Naive thymus-derived CD4-positive, alpha-beta T cell (primary cell): ENCODE measurements at regions of chr10 and their contacts with region 1.

Region 1: DNA sequence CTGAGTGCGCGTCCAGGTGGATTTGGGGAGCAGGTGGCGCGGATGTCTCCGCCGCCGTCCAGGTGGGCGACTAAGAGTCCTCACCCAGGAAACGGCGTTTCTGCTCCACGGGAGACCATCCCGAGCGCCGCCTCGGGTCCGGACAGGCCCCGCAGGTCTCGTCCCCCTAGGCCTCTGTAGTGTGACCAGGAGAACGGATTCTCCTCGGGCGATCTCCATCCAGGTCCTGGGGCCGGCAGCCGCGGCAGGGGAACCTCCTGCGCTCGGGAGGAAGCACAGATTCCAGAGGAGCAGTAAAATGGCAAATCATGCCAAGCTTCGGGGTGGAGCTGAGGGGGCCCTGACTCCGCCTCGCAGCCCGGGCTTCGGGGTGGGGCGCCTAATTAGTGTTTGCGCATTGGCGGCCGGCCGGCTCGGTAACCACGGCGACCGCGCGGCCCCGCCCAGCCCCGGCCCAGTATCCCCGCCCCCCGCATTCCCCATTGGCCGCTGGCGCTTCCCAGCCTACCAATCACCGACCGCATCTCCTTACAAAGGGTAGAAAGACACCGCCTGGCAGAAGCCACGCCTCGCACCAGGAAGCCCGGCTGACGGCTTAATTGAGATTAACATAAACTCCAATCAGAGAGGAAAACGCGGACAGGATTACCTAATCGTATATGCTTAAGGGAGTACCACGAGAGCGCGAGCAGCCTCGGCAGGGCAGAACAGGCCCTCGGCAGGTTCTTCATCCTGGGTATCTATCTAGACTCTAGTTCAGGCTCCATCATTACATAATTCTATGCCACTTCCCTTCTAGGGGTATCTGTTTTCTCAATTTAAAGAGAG is 168.6 kb downstream of the ARHGAP12 start:
- DNase-seq: peak; percentile 85 to 98 (median 94)
- ATAC-seq: peak; percentile 97
- H3K4me3 ChIP-seq: peak overlapping the region; percentile 95
- H3K4me3 Mint-ChIP-seq: peak overlapping the region; percentile 81 to 96 (median 91)
- H3K27ac ChIP-seq: peak overlapping the region; percentile 87
- H3K27ac Mint-ChIP-seq: peak overlapping the region; percentile 90 to 100 (median 98)
- H3K4me1 ChIP-seq: peaks cover 6 to 7% of the 10 kb centered on the region in 2 donors
- H3K4me1 Mint-ChIP-seq: peaks cover 8 to 24% (median 16%) of the 10 kb centered on the region in 7 donors
- H3K27me3 ChIP-seq: no peaks in the 10 kb centered on the region
- H3K27me3 Mint-ChIP-seq: no peaks in the 10 kb centered on the region

Region 2: DNA sequence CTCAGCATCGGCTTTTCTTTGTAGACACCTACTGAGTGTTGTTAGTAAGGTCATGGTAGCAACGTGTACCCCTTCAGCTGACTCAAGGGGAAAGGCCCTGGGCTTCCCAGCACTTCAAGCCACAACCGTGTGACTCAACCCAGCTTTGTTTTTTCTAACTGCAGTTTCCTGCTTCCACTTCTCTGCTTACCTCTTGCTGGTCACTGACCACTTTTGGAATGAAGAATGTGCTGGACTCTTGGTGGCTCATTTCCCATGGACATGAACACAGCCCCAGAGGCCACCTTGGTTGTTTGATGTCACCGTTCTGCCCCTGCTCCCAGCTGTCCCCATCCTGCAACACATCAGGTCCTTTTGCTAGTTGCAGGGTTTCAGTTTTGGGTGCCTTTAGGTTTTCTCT is 658.9 kb before region 1 on chr10:
- CTCF ChIA-PET with region 1: no interaction called
- POLR2A ChIA-PET with region 1: no interaction called
- intact Hi-C with region 1: loop called in 1 of 2 experiments (anchors 5 kb)
- DNase-seq: peak in 1 of 9 donors; percentile 74
- ATAC-seq: peak; percentile 58
- H3K4me3 ChIP-seq: no peak overlapping the region
- H3K4me3 Mint-ChIP-seq: peak overlapping the region in 1 of 10 donors; percentile 85
- H3K27ac ChIP-seq: no peak overlapping the region
- H3K27ac Mint-ChIP-seq: peak overlapping the region in 3 of 9 donors; percentile 28 to 95 (median 29)
- H3K4me1 ChIP-seq: no peaks in the 10 kb centered on the region
- H3K4me1 Mint-ChIP-seq: peaks cover 0 to 66% (median 4%) of the 10 kb centered on the region in 7 donors
- H3K27me3 ChIP-seq: no peaks in the 10 kb centered on the region
- H3K27me3 Mint-ChIP-seq: peaks cover 0 to 4% (median 0%) of the 10 kb centered on the region in 5 donors

Region 3: DNA sequence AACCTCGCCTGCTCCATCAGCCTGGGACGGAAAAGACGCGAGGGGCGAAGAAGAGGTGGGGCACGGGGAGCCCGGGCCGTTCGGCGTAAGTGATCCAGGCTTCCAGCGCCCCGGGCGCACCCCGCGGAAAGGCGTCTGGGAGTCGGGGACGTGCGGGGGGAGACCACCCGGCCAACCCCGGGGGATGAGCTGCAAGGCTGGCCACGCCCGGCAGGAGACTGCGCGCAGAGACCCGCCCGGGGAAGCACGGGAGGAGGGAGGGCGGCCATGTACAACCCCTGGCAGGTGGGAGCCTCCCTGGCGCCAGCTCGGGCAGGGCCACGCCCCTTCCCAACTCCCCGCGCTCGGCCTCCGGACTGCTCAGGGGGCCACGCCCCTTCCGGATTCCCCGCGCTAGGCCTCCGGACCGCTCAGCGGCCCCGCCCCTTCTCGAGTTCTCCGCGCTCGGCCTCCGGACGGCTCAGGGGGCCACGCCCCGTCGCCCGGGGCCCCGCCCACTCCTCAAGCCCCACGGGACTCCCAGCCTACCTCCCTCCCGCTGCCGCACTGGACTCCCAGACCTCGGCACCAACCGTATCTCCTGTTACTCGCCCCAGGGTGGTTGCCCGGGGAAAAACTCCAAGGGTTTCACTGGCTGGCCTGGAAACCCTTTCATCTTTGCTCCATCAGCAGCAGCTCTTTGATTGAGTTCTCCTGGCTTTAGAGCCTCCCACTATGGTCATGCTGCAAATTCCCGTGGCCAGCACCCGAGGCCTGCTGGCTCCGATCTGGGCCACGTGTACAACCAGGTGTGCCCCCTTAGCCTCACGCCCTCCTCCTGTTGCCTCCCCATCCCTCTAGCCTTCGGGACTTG is 156.6 kb before region 1 on chr10:
- CTCF ChIA-PET with region 1: no interaction called
- POLR2A ChIA-PET with region 1: no interaction called
- intact Hi-C with region 1: loop called (anchors 1 to 5 kb)
- DNase-seq: peak; percentile 15 to 91 (median 38)
- ATAC-seq: peak; percentile 93
- H3K4me3 ChIP-seq: peak overlapping the region; percentile 61
- H3K4me3 Mint-ChIP-seq: peak overlapping the region in 9 of 10 donors; percentile 86 to 94 (median 88)
- H3K27ac ChIP-seq: no peak overlapping the region
- H3K27ac Mint-ChIP-seq: peak overlapping the region in 3 of 9 donors; percentile 36 to 74 (median 53)
- H3K4me1 ChIP-seq: peaks cover 9 to 12% of the 10 kb centered on the region in 2 donors
- H3K4me1 Mint-ChIP-seq: peaks cover 0 to 20% (median 11%) of the 10 kb centered on the region in 7 donors
- H3K27me3 ChIP-seq: no peaks in the 10 kb centered on the region
- H3K27me3 Mint-ChIP-seq: peaks cover 0 to 2% (median 0%) of the 10 kb centered on the region in 5 donors

Region 4: DNA sequence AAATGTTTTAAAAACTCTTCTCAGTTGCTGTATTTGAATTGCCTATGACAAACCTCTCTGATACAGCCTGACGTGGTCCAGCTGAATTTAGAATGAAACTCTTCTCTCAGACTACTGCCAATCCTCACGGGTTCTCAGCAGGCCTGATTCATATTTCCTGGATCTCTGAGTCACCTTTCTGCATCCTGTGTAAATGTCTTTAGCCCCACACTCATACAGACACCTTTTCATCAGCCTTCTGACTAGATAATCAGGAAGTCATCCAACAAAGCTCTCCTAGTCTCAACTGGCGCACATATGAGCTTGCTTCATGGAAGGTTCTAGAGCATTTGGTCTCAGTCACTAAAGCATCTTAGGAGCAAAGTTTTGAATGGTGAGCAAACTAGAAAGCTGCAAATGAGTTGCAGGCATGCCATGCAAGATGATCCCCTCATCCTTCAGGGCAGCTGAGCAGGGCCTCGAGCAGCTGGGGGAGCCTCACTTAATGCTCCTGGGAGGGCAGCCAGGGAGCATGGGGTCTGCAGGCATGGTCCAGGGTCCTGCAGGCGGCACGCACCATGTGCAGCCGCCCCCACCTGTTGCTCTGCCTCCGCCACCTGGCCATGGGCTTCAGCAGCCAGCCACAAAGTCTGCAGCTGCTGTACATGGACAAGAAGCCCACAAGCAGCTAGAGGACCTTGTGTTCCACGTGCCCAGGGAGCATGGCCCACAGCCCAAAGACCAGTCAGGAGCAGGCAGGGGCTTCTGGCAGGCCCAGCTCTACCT is 14.2 kb before region 1 on chr10:
- CTCF ChIA-PET with region 1: no interaction called
- POLR2A ChIA-PET with region 1: no interaction called
- intact Hi-C with region 1: loop called in 1 of 2 experiments (anchors 1 kb)
- DNase-seq: peak in 1 of 9 donors; percentile 45
- ATAC-seq: peak; percentile 50
- H3K4me3 ChIP-seq: no peak overlapping the region
- H3K4me3 Mint-ChIP-seq: peak overlapping the region in 1 of 10 donors; percentile 33
- H3K27ac ChIP-seq: no peak overlapping the region
- H3K27ac Mint-ChIP-seq: peak overlapping the region in 6 of 9 donors; percentile 7 to 83 (median 57)
- H3K4me1 ChIP-seq: peaks cover 0 to 4% of the 10 kb centered on the region in 2 donors
- H3K4me1 Mint-ChIP-seq: peaks cover 0 to 31% (median 6%) of the 10 kb centered on the region in 7 donors
- H3K27me3 ChIP-seq: no peaks in the 10 kb centered on the region
- H3K27me3 Mint-ChIP-seq: no peaks in the 10 kb centered on the region

Region 5: GRCh38 chr10:31808258-31809218 is 48.5 kb after region 1 on chr10:
- CTCF ChIA-PET with region 1: no interaction called
- POLR2A ChIA-PET with region 1: no interaction called
- intact Hi-C with region 1: loop called (anchors 1 to 5 kb)
- DNase-seq: peak in 8 of 9 donors; percentile 21 to 62 (median 48)
- ATAC-seq: peak; percentile 77
- H3K4me3 ChIP-seq: no peak overlapping the region
- H3K4me3 Mint-ChIP-seq: peak overlapping the region in 3 of 10 donors; percentile 51 to 78 (median 56)
- H3K27ac ChIP-seq: no peak overlapping the region
- H3K27ac Mint-ChIP-seq: peak overlapping the region in 8 of 9 donors; percentile 17 to 94 (median 71)
- H3K4me1 ChIP-seq: no peaks in the 10 kb centered on the region
- H3K4me1 Mint-ChIP-seq: peaks cover 2 to 11% (median 6%) of the 10 kb centered on the region in 7 donors
- H3K27me3 ChIP-seq: no peaks in the 10 kb centered on the region
- H3K27me3 Mint-ChIP-seq: no peaks in the 10 kb centered on the region

Region 6: DNA sequence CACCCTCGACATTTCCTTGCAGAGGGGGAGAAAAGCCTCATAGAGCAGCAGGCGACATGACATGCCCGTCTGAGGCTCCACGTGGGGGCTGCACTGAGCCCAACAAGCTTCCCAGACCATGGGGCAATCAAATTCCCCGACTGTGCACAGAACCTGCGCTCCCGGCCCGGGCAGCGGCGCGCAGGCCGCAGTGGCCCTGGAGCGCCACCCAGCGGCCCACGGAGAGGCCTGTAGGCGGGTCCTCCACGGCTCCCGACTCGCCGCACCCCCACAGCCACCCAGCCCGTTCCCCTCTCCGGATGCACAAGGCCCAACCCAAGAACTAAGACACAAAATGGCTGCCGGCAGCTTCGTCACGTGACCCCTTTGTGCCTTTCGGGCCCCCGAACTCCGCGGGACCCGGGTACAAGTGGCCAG is 586.1 kb after region 1 on chr10:
- CTCF ChIA-PET with region 1: no interaction called
- POLR2A ChIA-PET with region 1: no interaction called
- intact Hi-C with region 1: loop called in 1 of 2 experiments (anchors 1 kb)
- DNase-seq: peak in 8 of 9 donors; percentile 93 to 98 (median 97)
- ATAC-seq: peak; percentile 92
- H3K4me3 ChIP-seq: peak overlapping the region; percentile 98
- H3K4me3 Mint-ChIP-seq: peak overlapping the region; percentile 86 to 97 (median 93)
- H3K27ac ChIP-seq: peak overlapping the region; percentile 99
- H3K27ac Mint-ChIP-seq: peak overlapping the region; percentile 99 to 100 (median 100)
- H3K4me1 ChIP-seq: peaks cover 42 to 50% of the 10 kb centered on the region in 2 donors
- H3K4me1 Mint-ChIP-seq: peaks cover 35 to 77% (median 73%) of the 10 kb centered on the region in 7 donors
- H3K27me3 ChIP-seq: no peaks in the 10 kb centered on the region
- H3K27me3 Mint-ChIP-seq: no peaks in the 10 kb centered on the region

Region 7: GRCh38 chr10:33134011-33134751 is 1374.2 kb after region 1 on chr10:
- CTCF ChIA-PET with region 1: no interaction called
- POLR2A ChIA-PET with region 1: no interaction called
- intact Hi-C with region 1: loop called in 1 of 2 experiments (anchors 5 kb)
- DNase-seq: peak in 2 of 9 donors; percentile 61 to 64
- ATAC-seq: peak; percentile 58
- H3K4me3 ChIP-seq: no peak overlapping the region
- H3K4me3 Mint-ChIP-seq: peak overlapping the region in 2 of 10 donors; percentile 27 to 50
- H3K27ac ChIP-seq: no peak overlapping the region
- H3K27ac Mint-ChIP-seq: peak overlapping the region in 8 of 9 donors; percentile 54 to 95 (median 82)
- H3K4me1 ChIP-seq: peaks cover 35 to 85% of the 10 kb centered on the region in 2 donors
- H3K4me1 Mint-ChIP-seq: peaks cover 25 to 78% (median 57%) of the 10 kb centered on the region in 7 donors
- H3K27me3 ChIP-seq: no peaks in the 10 kb centered on the region
- H3K27me3 Mint-ChIP-seq: no peaks in the 10 kb centered on the region